PC-3 (cell line): ENCODE measurements at regions of chr10 and their contacts with region 1.

Region 1: DNA sequence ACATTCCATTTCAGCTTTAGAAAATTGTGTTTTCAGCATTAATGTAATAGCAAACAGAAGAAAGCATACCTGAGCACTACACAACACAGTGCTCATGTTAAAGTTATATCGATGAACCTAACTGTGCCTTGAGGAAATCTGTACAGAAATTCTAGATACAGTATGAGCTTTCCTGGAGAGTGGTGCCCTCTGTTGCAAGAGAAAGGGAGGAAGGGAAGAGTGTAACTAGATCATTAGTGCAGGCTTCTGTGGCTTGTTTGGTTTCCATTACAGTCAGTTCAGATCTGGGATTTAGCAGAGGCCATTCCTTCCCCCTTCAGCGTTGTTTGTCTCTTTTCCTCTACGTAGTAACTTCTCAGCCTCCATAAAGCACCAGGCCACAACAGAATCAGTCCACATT is 139.7 kb downstream of the HTR7 start:
- DNase-seq: peak; percentile 25
- ATAC-seq: peak; percentile 67
- H3K4me3 ChIP-seq: no peak overlapping the region
- H3K27ac ChIP-seq: no peak overlapping the region
- H3K4me1 ChIP-seq: no peaks in the 10 kb centered on the region
- H3K27me3 ChIP-seq: no peaks in the 10 kb centered on the region
- CTCF ChIP-seq: peak; percentile 42; the same call in 1 of the 2 replicates

Region 2: GRCh38 chr10:90652519-90652918 is 65.7 kb before region 1 on chr10:
- CTCF ChIA-PET with region 1: no interaction called
- POLR2A ChIA-PET with region 1: no interaction called
- intact Hi-C with region 1: loop called (anchors 10 kb)
- DNase-seq: peak; percentile 57
- ATAC-seq: peak; percentile 53
- H3K4me3 ChIP-seq: no peak overlapping the region
- H3K27ac ChIP-seq: no peak overlapping the region
- H3K4me1 ChIP-seq: no peaks in the 10 kb centered on the region
- H3K27me3 ChIP-seq: no peaks in the 10 kb centered on the region
- CTCF ChIP-seq: peak; percentile 71

Region 3: DNA sequence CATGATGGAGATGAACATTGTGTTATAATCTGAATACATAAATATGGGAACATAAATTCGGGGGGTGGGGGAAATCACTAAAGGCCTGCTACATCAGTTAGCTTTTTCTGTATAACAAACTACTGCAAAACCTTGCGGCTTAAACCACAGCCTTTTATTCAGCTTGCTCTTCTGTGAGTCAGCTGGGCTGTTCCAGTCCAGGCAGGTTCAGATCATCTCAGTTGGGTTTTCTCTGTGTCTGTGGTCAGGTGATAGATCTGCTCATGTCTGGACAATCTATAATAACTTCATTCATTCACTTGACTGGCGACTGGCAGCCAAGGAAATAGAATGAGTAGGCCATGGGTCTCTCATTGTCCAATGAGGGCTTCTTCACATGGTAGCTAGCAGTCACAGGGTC is 116.1 kb after region 1 on chr10:
- CTCF ChIA-PET with region 1: no interaction called
- POLR2A ChIA-PET with region 1: no interaction called
- intact Hi-C with region 1: no loop called
- DNase-seq: no peak
- ATAC-seq: no peak
- H3K4me3 ChIP-seq: no peak overlapping the region
- H3K27ac ChIP-seq: no peak overlapping the region
- H3K4me1 ChIP-seq: no peaks in the 10 kb centered on the region
- H3K27me3 ChIP-seq: no peaks in the 10 kb centered on the region
- CTCF ChIP-seq: no peak